Caco-2 (cell line): ENCODE measurements at regions of chr11 and their contacts with region 1.

Region 1: GRCh38 chr11:2532704-2533586 is 88.1 kb downstream of the KCNQ1 start:
- DNase-seq: peak; percentile 92 to 95
- H3K4me3 ChIP-seq: no peak overlapping the region
- H3K4me3 Mint-ChIP-seq: no peak overlapping the region
- H3K27ac Mint-ChIP-seq: peak overlapping the region; percentile 37
- H3K4me1 ChIP-seq: peaks cover 21% of the 10 kb centered on the region
- H3K4me1 Mint-ChIP-seq: no peaks in the 10 kb centered on the region
- H3K27me3 ChIP-seq: no peaks in the 10 kb centered on the region
- H3K27me3 Mint-ChIP-seq: no peaks in the 10 kb centered on the region
- CTCF ChIP-seq: peak; percentile 98 to 99

Region 2: DNA sequence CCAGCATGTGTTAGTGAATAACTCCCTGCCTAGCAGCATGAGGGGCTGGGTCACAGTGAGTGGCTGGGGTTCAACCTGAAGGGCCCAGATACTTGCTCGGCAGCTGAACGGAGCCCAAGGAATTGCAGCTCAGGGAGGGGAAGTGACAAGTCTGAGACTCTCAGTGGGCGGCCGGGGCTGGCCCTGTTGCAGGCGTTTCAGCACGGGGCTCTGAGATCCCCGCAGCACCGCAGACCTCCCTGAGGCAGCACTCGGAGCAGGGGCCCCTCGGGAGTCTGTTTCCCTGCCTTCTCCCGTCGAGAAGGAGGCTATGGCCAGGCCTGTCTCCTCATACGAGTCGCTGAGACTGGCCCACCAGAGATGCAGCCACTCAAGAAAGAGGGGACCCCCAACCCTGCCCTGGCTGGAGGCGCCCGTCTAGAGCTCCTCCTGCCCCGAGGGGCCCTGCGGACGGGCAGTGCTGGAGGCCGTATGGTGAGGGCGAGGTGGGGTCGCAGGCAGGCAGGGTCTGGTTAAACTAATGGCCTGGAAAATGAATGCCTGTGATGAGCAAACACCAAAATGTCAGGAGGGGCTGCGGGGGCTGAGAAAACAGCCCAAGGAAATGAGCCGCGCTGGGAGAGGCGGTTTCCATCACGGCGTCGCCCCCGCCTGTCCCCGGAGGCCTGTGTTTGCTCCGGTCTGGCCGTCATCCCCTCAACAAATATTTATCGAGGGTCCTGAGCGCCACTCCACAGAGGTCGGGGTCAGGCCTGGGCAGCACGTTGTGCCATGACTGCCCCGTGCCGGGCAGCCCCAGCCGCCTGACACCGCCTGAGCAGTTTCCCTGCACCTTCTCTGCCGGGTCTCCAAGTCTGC is 123.1 kb before region 1 on chr11:
- CTCF ChIA-PET with region 1: no interaction called
- POLR2A ChIA-PET with region 1: no interaction called
- intact Hi-C with region 1: no loop called
- DNase-seq: no peak
- H3K4me3 ChIP-seq: no peak overlapping the region
- H3K4me3 Mint-ChIP-seq: no peak overlapping the region
- H3K27ac Mint-ChIP-seq: no peak overlapping the region
- H3K4me1 ChIP-seq: no peaks in the 10 kb centered on the region
- H3K4me1 Mint-ChIP-seq: no peaks in the 10 kb centered on the region
- H3K27me3 ChIP-seq: no peaks in the 10 kb centered on the region
- H3K27me3 Mint-ChIP-seq: no peaks in the 10 kb centered on the region
- CTCF ChIP-seq: no peak

Region 3: DNA sequence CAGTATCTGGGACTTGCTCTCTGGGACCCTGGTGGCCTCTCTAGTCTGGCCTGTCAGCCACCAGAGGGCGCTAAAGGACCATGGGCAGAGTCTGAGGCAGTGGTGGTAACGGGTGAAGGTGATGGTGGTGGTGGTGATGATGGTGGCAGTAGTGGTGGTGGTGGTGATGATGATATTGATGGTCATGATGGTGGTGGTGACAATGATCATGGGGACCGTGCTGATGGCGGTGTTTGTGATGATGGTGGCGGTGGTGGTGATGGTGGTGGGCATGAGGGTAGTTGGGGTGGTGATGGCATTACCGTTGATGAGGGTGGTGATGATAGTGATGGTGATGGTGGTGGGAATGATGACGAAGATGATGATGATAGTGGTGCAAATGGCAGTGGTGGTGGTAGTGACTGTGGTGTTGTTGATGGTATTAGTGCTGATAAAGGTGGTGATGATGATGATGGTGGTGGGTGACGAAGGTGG is 104.6 kb before region 1 on chr11:
- CTCF ChIA-PET with region 1: interaction called, 31 read pairs
- POLR2A ChIA-PET with region 1: no interaction called
- intact Hi-C with region 1: loop called (anchors 1 kb)
- DNase-seq: peak; percentile 68 to 80
- H3K4me3 ChIP-seq: no peak overlapping the region
- H3K4me3 Mint-ChIP-seq: no peak overlapping the region
- H3K27ac Mint-ChIP-seq: no peak overlapping the region
- H3K4me1 ChIP-seq: no peaks in the 10 kb centered on the region
- H3K4me1 Mint-ChIP-seq: no peaks in the 10 kb centered on the region
- H3K27me3 ChIP-seq: no peaks in the 10 kb centered on the region
- H3K27me3 Mint-ChIP-seq: no peaks in the 10 kb centered on the region
- CTCF ChIP-seq: peak; percentile 74 to 92

Region 4: GRCh38 chr11:2590965-2591754 is 58.2 kb after region 1 on chr11:
- CTCF ChIA-PET with region 1: no interaction called
- POLR2A ChIA-PET with region 1: no interaction called
- intact Hi-C with region 1: no loop called
- DNase-seq: no peak
- H3K4me3 ChIP-seq: no peak overlapping the region
- H3K4me3 Mint-ChIP-seq: no peak overlapping the region
- H3K27ac Mint-ChIP-seq: no peak overlapping the region
- H3K4me1 ChIP-seq: no peaks in the 10 kb centered on the region
- H3K4me1 Mint-ChIP-seq: no peaks in the 10 kb centered on the region
- H3K27me3 ChIP-seq: no peaks in the 10 kb centered on the region; the same call in 1 of the 2 replicates
- H3K27me3 Mint-ChIP-seq: peaks cover 13% of the 10 kb centered on the region
- CTCF ChIP-seq: no peak

Region 5: DNA sequence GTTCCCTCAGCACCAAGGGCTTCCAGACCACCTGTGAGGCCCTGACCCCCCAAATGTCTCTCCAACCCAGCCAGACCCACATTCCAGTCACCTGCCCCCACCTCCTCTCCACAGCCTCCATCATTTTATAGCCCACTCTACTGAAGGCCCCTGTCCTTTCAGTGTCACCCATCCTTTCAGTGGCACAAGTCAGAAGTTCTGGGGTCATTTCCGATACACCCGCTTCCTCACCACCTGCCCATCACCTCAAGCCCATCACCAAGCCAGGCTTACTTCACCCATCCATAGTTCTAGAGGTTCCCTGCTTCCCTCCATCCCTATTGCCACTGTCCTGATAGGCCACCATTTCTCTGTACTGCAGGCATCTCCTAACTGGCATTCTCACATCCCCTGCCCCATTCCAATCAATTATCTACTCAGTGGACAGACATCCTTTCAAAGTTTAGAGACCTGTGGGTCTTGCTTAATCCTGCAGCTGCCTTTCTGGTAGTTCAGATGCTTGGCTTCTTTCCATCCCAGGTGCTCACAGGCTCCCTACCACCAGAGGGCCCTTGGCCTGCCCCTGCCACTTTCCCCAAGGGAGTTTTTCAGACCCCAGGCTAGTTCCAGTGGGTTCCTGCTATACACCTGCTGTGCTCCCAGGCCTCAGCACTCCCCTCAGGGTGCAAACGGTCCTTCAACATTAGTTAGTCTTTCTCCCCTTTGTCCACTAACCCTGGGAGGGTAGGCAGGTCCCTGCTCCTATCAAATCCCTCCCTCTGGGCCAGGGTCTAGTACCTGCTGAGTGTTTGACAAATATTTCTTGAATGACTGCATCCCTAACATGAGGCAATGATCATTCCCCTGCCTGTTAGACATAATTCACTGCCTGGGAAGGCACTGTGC is 159.3 kb after region 1 on chr11:
- CTCF ChIA-PET with region 1: no interaction called
- POLR2A ChIA-PET with region 1: no interaction called
- intact Hi-C with region 1: loop called (anchors 5 kb)
- DNase-seq: peak; percentile 46 to 55
- H3K4me3 ChIP-seq: no peak overlapping the region
- H3K4me3 Mint-ChIP-seq: no peak overlapping the region
- H3K27ac Mint-ChIP-seq: no peak overlapping the region
- H3K4me1 ChIP-seq: peaks cover 19% of the 10 kb centered on the region
- H3K4me1 Mint-ChIP-seq: peaks cover 34% of the 10 kb centered on the region
- H3K27me3 ChIP-seq: no peaks in the 10 kb centered on the region
- H3K27me3 Mint-ChIP-seq: no peaks in the 10 kb centered on the region
- CTCF ChIP-seq: peak; percentile 33 to 70

Region 6: DNA sequence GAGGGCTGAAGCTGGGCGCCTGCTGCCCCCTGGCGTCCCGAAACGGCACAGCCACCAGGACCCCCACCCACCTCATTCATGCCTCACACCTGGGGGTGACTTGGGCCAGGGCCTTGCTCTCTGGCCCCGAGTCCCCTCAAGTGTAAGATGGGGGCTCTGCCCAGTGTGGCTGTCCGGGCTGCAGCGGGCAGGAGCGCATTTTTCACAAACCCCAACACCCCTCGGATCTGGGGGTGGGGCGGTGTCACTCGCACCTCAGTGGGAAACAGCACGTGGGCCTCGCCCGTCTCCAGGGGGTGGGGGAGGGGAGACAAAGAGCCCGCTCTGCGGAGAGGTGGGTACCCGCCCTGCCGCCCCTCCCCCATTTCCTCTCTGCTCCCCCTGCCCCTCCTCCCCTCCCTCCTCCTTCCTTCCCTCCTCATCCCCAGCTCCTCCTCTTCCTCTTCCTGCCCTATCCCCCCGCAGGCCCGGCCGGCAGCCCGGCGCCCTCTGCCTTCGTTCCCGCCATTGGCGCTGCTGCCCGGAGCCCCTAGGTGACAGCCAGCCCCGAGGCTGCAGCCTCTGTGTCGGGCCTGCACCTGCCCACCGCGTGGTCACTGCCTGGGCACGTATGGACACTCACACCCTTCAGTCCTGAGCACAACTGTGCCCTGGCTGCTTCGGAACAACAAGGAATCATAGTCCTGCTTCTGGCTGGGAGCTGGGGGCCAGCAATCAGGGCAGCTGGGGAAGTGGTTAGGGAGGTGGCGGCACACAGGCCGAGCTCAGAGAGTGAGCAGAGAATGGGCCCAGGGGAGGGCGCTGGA is 359.5 kb after region 1 on chr11:
- CTCF ChIA-PET with region 1: interaction called, 131 read pairs
- POLR2A ChIA-PET with region 1: no interaction called
- intact Hi-C with region 1: loop called (anchors 1 kb)
- DNase-seq: peak in 1 of 2 experiments; percentile 78
- H3K4me3 ChIP-seq: no peak overlapping the region
- H3K4me3 Mint-ChIP-seq: no peak overlapping the region
- H3K27ac Mint-ChIP-seq: no peak overlapping the region
- H3K4me1 ChIP-seq: peaks cover 31% of the 10 kb centered on the region
- H3K4me1 Mint-ChIP-seq: peaks cover 17% of the 10 kb centered on the region
- H3K27me3 ChIP-seq: no peaks in the 10 kb centered on the region
- H3K27me3 Mint-ChIP-seq: no peaks in the 10 kb centered on the region
- CTCF ChIP-seq: peak; percentile 87 to 94

Region 7: GRCh38 chr11:3345709-3346108 is 812.8 kb after region 1 on chr11:
- CTCF ChIA-PET with region 1: no interaction called
- POLR2A ChIA-PET with region 1: no interaction called
- intact Hi-C with region 1: no loop called
- DNase-seq: no peak
- H3K4me3 ChIP-seq: no peak overlapping the region
- H3K4me3 Mint-ChIP-seq: no peak overlapping the region
- H3K27ac Mint-ChIP-seq: no peak overlapping the region
- H3K4me1 ChIP-seq: no peaks in the 10 kb centered on the region
- H3K4me1 Mint-ChIP-seq: peaks cover 8% of the 10 kb centered on the region
- H3K27me3 ChIP-seq: no peaks in the 10 kb centered on the region
- H3K27me3 Mint-ChIP-seq: peaks cover 3% of the 10 kb centered on the region
- CTCF ChIP-seq: no peak